HCT116 (cell line): ENCODE measurements at regions of chr4 and their contacts with region 1.

Region 1: DNA sequence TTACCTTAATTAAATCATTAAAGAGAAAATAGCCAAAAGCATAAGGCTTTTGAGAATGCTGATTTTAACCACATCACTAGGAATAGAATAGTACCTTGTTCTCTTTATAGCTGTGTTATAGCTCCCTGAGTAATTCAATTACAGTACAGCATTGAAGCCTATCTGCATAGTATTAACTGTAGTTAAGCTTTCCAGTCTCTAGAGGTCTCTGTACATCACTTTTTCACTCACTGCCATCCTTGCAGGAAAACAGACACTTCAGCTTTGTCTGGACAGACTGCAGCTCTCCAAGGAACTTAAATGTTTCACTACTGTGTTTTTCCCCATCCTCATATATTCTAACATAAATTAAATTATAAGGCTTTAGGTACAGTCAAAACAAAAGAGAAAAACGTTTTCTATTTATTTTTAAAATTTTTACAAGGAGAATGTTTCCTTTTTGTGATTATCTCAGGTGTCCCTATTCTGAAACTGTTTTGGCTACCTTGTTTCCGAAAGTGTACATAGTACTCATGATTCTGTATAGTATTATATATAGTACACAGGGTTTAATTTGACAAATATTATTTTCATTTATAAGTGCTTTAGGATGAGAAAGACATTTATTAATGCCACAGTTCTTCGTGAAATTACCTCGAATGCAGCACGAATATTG is 407.9 kb downstream of the PCDH18 start:
- DNase-seq: peak; percentile 53
- ATAC-seq: peak; percentile 97
- H3K4me3 ChIP-seq: peak overlapping the region; percentile 40 to 51
- H3K27ac ChIP-seq: no peak overlapping the region
- H3K4me1 ChIP-seq: no peaks in the 10 kb centered on the region
- H3K27me3 ChIP-seq: no peaks in the 10 kb centered on the region
- CTCF ChIP-seq: peak; percentile 40 to 63 (median 47)
- POLR2A ChIP-seq: no peak
- RAD21 ChIP-seq: peak; percentile 77

Region 2: DNA sequence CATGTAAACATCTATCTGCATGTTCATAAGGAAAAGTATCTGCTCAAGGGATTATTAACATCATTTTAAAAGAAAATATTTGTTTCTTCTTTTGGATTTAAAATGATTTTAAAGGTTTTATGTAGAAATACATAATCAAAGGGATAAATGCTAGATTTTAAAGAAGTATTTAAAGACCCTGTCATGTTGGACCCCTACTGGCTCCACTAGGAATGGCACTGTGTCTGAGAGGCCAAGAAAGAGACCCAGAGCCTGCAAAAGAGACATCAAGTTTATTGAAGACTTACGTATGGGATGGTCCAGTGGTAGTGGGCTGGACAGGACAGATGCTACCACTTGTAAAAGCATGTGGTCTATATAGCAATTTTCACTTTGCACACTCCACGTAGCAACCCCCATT is 486.6 kb after region 1 on chr4:
- CTCF ChIA-PET with region 1: no interaction called
- POLR2A ChIA-PET with region 1: no interaction called
- RAD21 ChIA-PET with region 1: no interaction called
- intact Hi-C with region 1: loop called (anchors 10 kb)
- DNase-seq: no peak
- ATAC-seq: peak; percentile 79
- H3K4me3 ChIP-seq: no peak overlapping the region
- H3K27ac ChIP-seq: no peak overlapping the region
- H3K4me1 ChIP-seq: no peaks in the 10 kb centered on the region
- H3K27me3 ChIP-seq: no peaks in the 10 kb centered on the region
- CTCF ChIP-seq: peak in 2 of 3 experiments; percentile 66 to 69; a peak in 4 of 6 replicates
- POLR2A ChIP-seq: no peak
- RAD21 ChIP-seq: peak; percentile 22; the same call in 1 of the 2 replicates

Region 3: GRCh38 chr4:137735561-137736104 is 611.2 kb after region 1 on chr4:
- CTCF ChIA-PET with region 1: interaction called, 3 read pairs
- POLR2A ChIA-PET with region 1: no interaction called
- RAD21 ChIA-PET with region 1: no interaction called
- intact Hi-C with region 1: loop called (anchors 10 kb)
- DNase-seq: no peak
- ATAC-seq: no peak
- H3K4me3 ChIP-seq: no peak overlapping the region
- H3K27ac ChIP-seq: no peak overlapping the region
- H3K4me1 ChIP-seq: no peaks in the 10 kb centered on the region
- H3K27me3 ChIP-seq: no peaks in the 10 kb centered on the region
- CTCF ChIP-seq: no peak
- POLR2A ChIP-seq: no peak
- RAD21 ChIP-seq: no peak

Region 4: DNA sequence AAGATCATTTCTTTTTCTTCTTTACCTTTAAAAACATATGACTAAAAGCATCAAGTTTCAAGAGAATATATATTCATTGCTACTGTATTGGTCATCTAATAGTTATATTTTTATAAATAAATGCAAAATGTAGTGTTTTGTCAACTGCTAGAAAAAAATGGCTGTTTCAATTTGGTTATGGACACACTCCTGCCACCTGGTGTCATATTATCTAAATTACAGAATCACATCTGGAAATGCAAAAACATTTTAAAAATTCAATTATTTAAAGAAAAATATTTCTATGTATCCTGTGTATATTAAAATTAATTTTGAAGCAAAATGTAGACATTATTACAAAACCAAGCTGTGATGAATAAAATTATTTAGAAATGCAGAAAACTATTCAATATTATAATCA is 737.3 kb after region 1 on chr4:
- CTCF ChIA-PET with region 1: interaction called, 7 read pairs
- POLR2A ChIA-PET with region 1: no interaction called
- RAD21 ChIA-PET with region 1: no interaction called
- intact Hi-C with region 1: loop called (anchors 5 kb)
- DNase-seq: no peak
- ATAC-seq: no peak
- H3K4me3 ChIP-seq: no peak overlapping the region
- H3K27ac ChIP-seq: no peak overlapping the region
- H3K4me1 ChIP-seq: no peaks in the 10 kb centered on the region
- H3K27me3 ChIP-seq: no peaks in the 10 kb centered on the region
- CTCF ChIP-seq: peak; percentile 29 to 37 (median 37); a peak in 4 of 6 replicates
- POLR2A ChIP-seq: no peak
- RAD21 ChIP-seq: peak; percentile 50

Region 5: DNA sequence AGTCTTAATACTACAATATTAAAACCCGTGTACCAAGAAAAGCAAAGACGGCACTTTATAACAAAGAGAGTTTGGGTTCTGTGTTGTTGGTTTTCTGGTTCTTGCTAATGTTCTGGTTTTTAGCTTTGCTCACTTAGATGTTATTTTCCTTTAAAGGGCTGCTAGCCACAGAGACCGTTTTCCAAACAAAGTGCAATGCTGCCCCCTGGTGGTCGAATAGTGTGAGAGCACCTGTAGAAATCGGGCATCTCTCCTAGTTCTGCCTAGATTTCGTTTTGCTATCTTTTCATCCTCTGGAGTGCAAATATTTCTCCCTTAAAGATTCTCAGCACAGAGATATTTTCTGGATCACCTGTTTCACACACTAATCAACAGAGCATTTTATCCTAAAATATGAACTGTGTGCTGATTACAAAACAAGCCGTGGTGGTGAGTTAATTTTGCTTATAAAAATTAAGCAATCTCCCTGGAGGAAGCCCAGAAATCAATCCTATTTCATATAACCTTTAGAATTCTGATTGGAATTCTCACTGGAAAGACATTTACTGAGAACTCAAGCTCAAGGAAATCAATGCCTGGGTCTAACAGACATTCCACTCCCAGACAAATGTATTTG is 1556.7 kb after region 1 on chr4:
- CTCF ChIA-PET with region 1: no interaction called
- POLR2A ChIA-PET with region 1: no interaction called
- RAD21 ChIA-PET with region 1: no interaction called
- intact Hi-C with region 1: loop called (anchors 10 kb)
- DNase-seq: peak; percentile 57
- ATAC-seq: peak; percentile 84
- H3K4me3 ChIP-seq: no peak overlapping the region
- H3K27ac ChIP-seq: no peak overlapping the region
- H3K4me1 ChIP-seq: no peaks in the 10 kb centered on the region
- H3K27me3 ChIP-seq: no peaks in the 10 kb centered on the region
- CTCF ChIP-seq: peak; percentile 72 to 96 (median 74); a peak in 5 of 6 replicates
- POLR2A ChIP-seq: no peak
- RAD21 ChIP-seq: peak; percentile 91